ENCODE measurements at regions of chr1 and their contacts with region 1.

Region 1: DNA sequence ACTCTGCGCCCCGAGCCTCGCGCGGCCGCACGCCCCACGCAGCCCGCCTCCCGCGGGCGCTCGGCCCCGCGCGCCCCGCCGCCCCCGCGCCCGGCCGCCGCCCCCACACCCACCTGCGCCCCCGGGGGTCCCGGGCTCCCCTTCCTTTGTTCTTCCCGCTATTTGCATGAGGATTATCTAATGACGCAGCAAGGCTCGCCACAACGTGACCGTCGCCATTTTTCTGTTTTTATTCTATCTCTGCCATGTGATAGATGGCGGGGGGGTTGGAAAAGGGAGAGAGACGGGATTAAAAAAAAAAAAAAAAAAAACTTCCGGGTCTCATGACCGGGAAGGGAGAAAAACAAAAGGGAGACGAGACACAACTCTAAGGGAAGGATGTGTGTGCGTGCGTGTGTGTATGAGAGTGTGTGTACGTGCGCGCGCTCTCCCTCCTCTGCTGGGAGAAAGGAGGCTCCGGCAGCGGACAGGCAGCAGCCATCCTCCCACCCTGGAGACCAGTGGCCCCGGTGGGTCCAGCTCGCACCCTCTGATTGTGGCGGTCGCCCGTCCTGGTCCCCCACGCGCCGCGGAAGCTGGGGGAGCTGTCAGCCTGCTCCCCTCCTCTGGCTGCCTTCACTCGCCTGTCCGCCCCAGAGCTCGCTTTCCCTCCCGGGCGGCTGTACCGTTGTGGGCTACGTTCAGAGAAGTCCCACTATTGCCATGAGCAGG is 80.4 kb upstream of the AK4 start:
- DNase-seq: peak; percentile 34 to 85 (median 60)
- ATAC-seq: peak; percentile 19
- H3K4me3 ChIP-seq: peak overlapping the region; percentile 85
- H3K4me3 Mint-ChIP-seq: peak overlapping the region; percentile 90
- H3K27ac ChIP-seq: peak overlapping the region; percentile 96 to 98
- H3K27ac Mint-ChIP-seq: peak overlapping the region; percentile 97
- H3K4me1 ChIP-seq: peaks cover 34% of the 10 kb centered on the region
- H3K4me1 Mint-ChIP-seq: peaks cover 64% of the 10 kb centered on the region
- H3K27me3 ChIP-seq: no peaks in the 10 kb centered on the region
- H3K27me3 Mint-ChIP-seq: no peaks in the 10 kb centered on the region
- CTCF ChIP-seq: no peak

Region 2: DNA sequence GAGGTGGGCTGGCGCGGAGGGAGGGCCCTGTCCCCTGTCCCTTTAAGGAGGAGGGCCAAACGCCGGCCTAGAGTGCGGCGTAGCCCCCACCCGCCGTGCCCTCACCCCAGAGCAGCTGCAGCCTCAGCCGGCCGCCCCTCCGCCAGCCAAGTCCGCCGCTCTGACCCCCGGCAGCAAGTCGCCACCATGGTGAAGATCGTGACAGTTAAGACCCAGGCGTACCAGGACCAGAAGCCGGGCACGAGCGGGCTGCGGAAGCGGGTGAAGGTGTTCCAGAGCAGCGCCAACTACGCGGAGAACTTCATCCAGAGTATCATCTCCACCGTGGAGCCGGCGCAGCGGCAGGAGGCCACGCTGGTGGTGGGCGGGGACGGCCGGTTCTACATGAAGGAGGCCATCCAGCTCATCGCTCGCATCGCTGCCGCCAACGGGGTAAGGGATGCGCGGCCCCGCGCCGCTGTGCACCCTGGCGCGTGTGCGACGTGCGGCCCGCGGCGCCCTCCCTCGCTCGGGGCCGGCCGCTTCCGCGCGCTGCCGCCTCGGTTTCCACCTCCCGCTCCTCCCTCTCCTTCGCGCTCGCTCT is 1474.3 kb before region 1 on chr1 and contains the start of gene PGM1:
- CTCF ChIA-PET with region 1: no interaction called
- POLR2A ChIA-PET with region 1: no interaction called
- intact Hi-C with region 1: loop called in 1 of 2 experiments (anchors 10 kb)
- DNase-seq: peak; percentile 55 to 91 (median 73)
- ATAC-seq: peak; percentile 77
- H3K4me3 ChIP-seq: peak within 1 kb of the TSS; percentile 87
- H3K4me3 Mint-ChIP-seq: peak within 1 kb of the TSS; percentile 99
- H3K27ac ChIP-seq: peak within 1 kb of the TSS; percentile 82 to 87
- H3K27ac Mint-ChIP-seq: peak within 1 kb of the TSS; percentile 99
- H3K4me1 ChIP-seq: peaks cover 21% of the 10 kb centered on the region
- H3K4me1 Mint-ChIP-seq: peaks cover 45% of the 10 kb centered on the region
- H3K27me3 ChIP-seq: no peaks in the 10 kb centered on the region
- H3K27me3 Mint-ChIP-seq: no peaks in the 10 kb centered on the region
- CTCF ChIP-seq: no peak
- total RNA-seq, gene PGM1: 5.4 to 5.6 TPM

Region 3: GRCh38 chr1:64711266-64711665 is 356.4 kb before region 1 on chr1:
- CTCF ChIA-PET with region 1: no interaction called
- POLR2A ChIA-PET with region 1: no interaction called
- intact Hi-C with region 1: no loop called
- DNase-seq: no peak
- ATAC-seq: no peak
- H3K4me3 ChIP-seq: no peak overlapping the region
- H3K4me3 Mint-ChIP-seq: no peak overlapping the region
- H3K27ac ChIP-seq: no peak overlapping the region
- H3K27ac Mint-ChIP-seq: no peak overlapping the region
- H3K4me1 ChIP-seq: no peaks in the 10 kb centered on the region
- H3K4me1 Mint-ChIP-seq: no peaks in the 10 kb centered on the region
- H3K27me3 ChIP-seq: peaks cover 0 to 2% of the 10 kb centered on the region in 2 experiments
- H3K27me3 Mint-ChIP-seq: no peaks in the 10 kb centered on the region
- CTCF ChIP-seq: no peak

Region 4: GRCh38 chr1:64877151-64877550 is 190.5 kb before region 1 on chr1:
- CTCF ChIA-PET with region 1: interaction called, 3 read pairs
- POLR2A ChIA-PET with region 1: interaction called, 5 read pairs
- intact Hi-C with region 1: loop called (anchors 5 to 10 kb)
- DNase-seq: peak in 10 of 14 experiments; percentile 15 to 90 (median 36)
- ATAC-seq: peak; percentile 93
- H3K4me3 ChIP-seq: no peak overlapping the region
- H3K4me3 Mint-ChIP-seq: peak overlapping the region; percentile 68
- H3K27ac ChIP-seq: peak overlapping the region in 1 of 2 donors; percentile 53
- H3K27ac Mint-ChIP-seq: peak overlapping the region; percentile 82
- H3K4me1 ChIP-seq: peaks cover 33% of the 10 kb centered on the region
- H3K4me1 Mint-ChIP-seq: peaks cover 84% of the 10 kb centered on the region
- H3K27me3 ChIP-seq: no peaks in the 10 kb centered on the region
- H3K27me3 Mint-ChIP-seq: no peaks in the 10 kb centered on the region
- CTCF ChIP-seq: no peak

Region 5: GRCh38 chr1:65002508-65003315 is 64.9 kb before region 1 on chr1:
- CTCF ChIA-PET with region 1: no interaction called
- POLR2A ChIA-PET with region 1: interaction called, 6 read pairs
- intact Hi-C with region 1: loop called in 1 of 2 experiments (anchors 5 kb)
- DNase-seq: peak; percentile 47 to 92 (median 64)
- ATAC-seq: peak; percentile 89
- H3K4me3 ChIP-seq: peak overlapping the region; percentile 67
- H3K4me3 Mint-ChIP-seq: peak overlapping the region; percentile 74
- H3K27ac ChIP-seq: no peak overlapping the region
- H3K27ac Mint-ChIP-seq: peak overlapping the region; percentile 86
- H3K4me1 ChIP-seq: peaks cover 23% of the 10 kb centered on the region
- H3K4me1 Mint-ChIP-seq: peaks cover 27% of the 10 kb centered on the region
- H3K27me3 ChIP-seq: no peaks in the 10 kb centered on the region
- H3K27me3 Mint-ChIP-seq: no peaks in the 10 kb centered on the region
- CTCF ChIP-seq: no peak

Region 6: DNA sequence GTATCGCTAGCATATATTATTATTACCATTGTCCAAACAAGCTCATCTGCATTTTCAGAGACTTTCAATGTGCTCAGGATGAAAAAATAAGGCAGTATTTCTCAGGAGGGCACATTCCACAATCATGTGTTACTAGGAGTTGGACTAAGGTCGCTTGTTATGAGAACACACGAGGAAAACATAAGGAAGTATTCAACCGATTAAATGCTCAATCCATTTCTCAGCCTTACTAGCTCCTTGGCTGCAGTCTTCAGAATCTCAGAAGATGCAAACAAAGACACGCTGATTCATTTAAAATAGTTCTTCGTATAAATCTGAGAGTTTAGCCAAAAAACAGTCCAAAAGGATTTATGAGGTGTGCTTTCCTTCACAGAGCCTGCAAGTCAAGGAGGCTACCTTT is 19.3 kb before region 1 on chr1:
- CTCF ChIA-PET with region 1: no interaction called
- POLR2A ChIA-PET with region 1: interaction called, 27 read pairs
- intact Hi-C with region 1: no loop called
- DNase-seq: no peak
- ATAC-seq: no peak
- H3K4me3 ChIP-seq: no peak overlapping the region
- H3K4me3 Mint-ChIP-seq: no peak overlapping the region
- H3K27ac ChIP-seq: no peak overlapping the region
- H3K27ac Mint-ChIP-seq: peak overlapping the region; percentile 39
- H3K4me1 ChIP-seq: peaks cover 34% of the 10 kb centered on the region
- H3K4me1 Mint-ChIP-seq: peaks cover 69% of the 10 kb centered on the region
- H3K27me3 ChIP-seq: no peaks in the 10 kb centered on the region
- H3K27me3 Mint-ChIP-seq: no peaks in the 10 kb centered on the region
- CTCF ChIP-seq: no peak

Region 7: GRCh38 chr1:65090403-65090802 is 22.8 kb after region 1 on chr1:
- CTCF ChIA-PET with region 1: no interaction called
- POLR2A ChIA-PET with region 1: no interaction called
- intact Hi-C with region 1: no loop called
- DNase-seq: no peak
- ATAC-seq: no peak
- H3K4me3 ChIP-seq: no peak overlapping the region
- H3K4me3 Mint-ChIP-seq: no peak overlapping the region
- H3K27ac ChIP-seq: no peak overlapping the region
- H3K27ac Mint-ChIP-seq: no peak overlapping the region
- H3K4me1 ChIP-seq: no peaks in the 10 kb centered on the region
- H3K4me1 Mint-ChIP-seq: no peaks in the 10 kb centered on the region
- H3K27me3 ChIP-seq: peaks cover 0 to 1% of the 10 kb centered on the region in 2 experiments
- H3K27me3 Mint-ChIP-seq: no peaks in the 10 kb centered on the region
- CTCF ChIP-seq: no peak

Region 8: GRCh38 chr1:65254319-65255034 is 186.8 kb after region 1 on chr1:
- CTCF ChIA-PET with region 1: no interaction called
- POLR2A ChIA-PET with region 1: no interaction called
- intact Hi-C with region 1: loop called in 1 of 2 experiments (anchors 5 kb)
- DNase-seq: peak; percentile 70 to 93 (median 84)
- ATAC-seq: peak; percentile 97
- H3K4me3 ChIP-seq: peak overlapping the region; percentile 65
- H3K4me3 Mint-ChIP-seq: peak overlapping the region; percentile 91
- H3K27ac ChIP-seq: no peak overlapping the region
- H3K27ac Mint-ChIP-seq: peak overlapping the region; percentile 57
- H3K4me1 ChIP-seq: peaks cover 21% of the 10 kb centered on the region
- H3K4me1 Mint-ChIP-seq: peaks cover 12% of the 10 kb centered on the region
- H3K27me3 ChIP-seq: peaks cover 3 to 5% of the 10 kb centered on the region in 2 experiments
- H3K27me3 Mint-ChIP-seq: peaks cover 15% of the 10 kb centered on the region
- CTCF ChIP-seq: no peak

Region 9: GRCh38 chr1:65265651-65266351 is 198.2 kb after region 1 on chr1:
- CTCF ChIA-PET with region 1: no interaction called
- POLR2A ChIA-PET with region 1: no interaction called
- intact Hi-C with region 1: no loop called
- DNase-seq: peak in 12 of 14 experiments; percentile 10 to 68 (median 31)
- ATAC-seq: peak; percentile 83
- H3K4me3 ChIP-seq: peak overlapping the region; percentile 62
- H3K4me3 Mint-ChIP-seq: peak overlapping the region; percentile 64
- H3K27ac ChIP-seq: no peak overlapping the region
- H3K27ac Mint-ChIP-seq: no peak overlapping the region
- H3K4me1 ChIP-seq: peaks cover 10% of the 10 kb centered on the region
- H3K4me1 Mint-ChIP-seq: peaks cover 22% of the 10 kb centered on the region
- H3K27me3 ChIP-seq: peaks cover 10 to 37% of the 10 kb centered on the region in 2 experiments
- H3K27me3 Mint-ChIP-seq: peaks cover 41% of the 10 kb centered on the region
- CTCF ChIP-seq: no peak

Measured in CD4-positive, alpha-beta T cell (primary cell).